ENCODE measurements at regions of chr16 and their contacts with region 1.

Region 1: DNA sequence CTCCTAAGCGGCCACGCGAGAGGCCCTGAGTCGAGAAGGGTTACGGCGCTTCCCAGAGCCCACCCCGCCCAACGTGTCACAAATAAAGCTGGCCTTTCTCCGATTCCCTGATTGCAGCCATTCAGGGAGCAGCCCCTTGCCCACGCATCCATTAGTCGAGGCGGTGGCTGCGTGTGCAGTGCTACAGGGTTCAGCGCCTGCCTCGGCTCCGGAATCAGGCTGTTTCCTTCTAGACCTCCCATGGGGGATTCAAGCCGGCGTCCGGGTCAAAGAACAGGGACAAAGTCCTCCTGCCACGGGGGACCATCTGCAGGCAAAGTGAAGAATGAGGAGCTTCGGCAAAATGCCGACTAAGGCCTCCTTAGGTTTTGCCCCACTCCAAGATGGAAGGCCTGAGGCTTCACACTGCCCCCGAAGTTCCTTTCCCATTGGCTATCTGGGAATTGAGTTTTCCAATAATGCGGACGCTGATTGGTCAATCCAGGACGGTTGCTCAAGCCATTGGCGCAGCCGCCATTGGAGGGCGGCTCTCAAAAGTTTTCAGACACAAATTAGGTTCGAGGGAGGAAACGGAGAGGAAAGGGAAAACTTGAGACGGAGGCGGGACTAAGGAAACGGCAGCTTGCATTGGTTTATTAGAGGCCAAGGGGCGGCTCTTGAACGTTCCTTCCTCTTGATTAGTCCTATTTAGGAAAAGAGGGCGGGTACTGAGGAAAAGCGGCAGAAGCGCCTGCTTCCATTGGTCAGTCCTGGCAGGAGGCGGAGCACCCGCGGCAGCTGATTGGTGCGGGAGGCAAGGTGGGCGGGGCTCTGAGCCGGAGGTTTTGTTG is 430 bp upstream of the KATNB1 start:
- DNase-seq: peak; percentile 95 to 99
- ATAC-seq: peak; percentile 88 to 97 (median 88)
- H3K4me3 ChIP-seq: peak overlapping the region; percentile 70
- H3K4me3 Mint-ChIP-seq: peak overlapping the region; percentile 95
- H3K27ac ChIP-seq: peak overlapping the region; percentile 67
- H3K27ac Mint-ChIP-seq: peak overlapping the region; percentile 96
- H3K4me1 ChIP-seq: peaks cover 24% of the 10 kb centered on the region
- H3K4me1 Mint-ChIP-seq: peaks cover 34 to 37% of the 10 kb centered on the region in 2 donors
- H3K27me3 ChIP-seq: no peaks in the 10 kb centered on the region
- H3K27me3 Mint-ChIP-seq: no peaks in the 10 kb centered on the region
- CTCF ChIP-seq: no peak

Region 2: GRCh38 chr16:57447186-57447962 is 287.8 kb before region 1 on chr16 and contains the starts of genes CIAPIN1 and COQ9:
- intact Hi-C with region 1: loop called (anchors 1 kb)
- DNase-seq: peak; percentile 87 to 97
- ATAC-seq: peak; percentile 98 to 99 (median 99)
- H3K4me3 ChIP-seq: peak within 1 kb of the TSS; percentile 90
- H3K4me3 Mint-ChIP-seq: peak within 1 kb of the TSS; percentile 90
- H3K27ac ChIP-seq: peak within 1 kb of the TSS; percentile 75
- H3K27ac Mint-ChIP-seq: peak within 1 kb of the TSS; percentile 77 to 89
- H3K4me1 ChIP-seq: peaks cover 20% of the 10 kb centered on the region
- H3K4me1 Mint-ChIP-seq: peaks cover 10 to 20% of the 10 kb centered on the region in 2 donors
- H3K27me3 ChIP-seq: no peaks in the 10 kb centered on the region
- H3K27me3 Mint-ChIP-seq: no peaks in the 10 kb centered on the region
- CTCF ChIP-seq: no peak
- total RNA-seq, gene CIAPIN1: 41.1 to 48.8 (median 42.9) TPM
- total RNA-seq, gene COQ9: 16.9 to 30.2 (median 18.3) TPM

Region 3: DNA sequence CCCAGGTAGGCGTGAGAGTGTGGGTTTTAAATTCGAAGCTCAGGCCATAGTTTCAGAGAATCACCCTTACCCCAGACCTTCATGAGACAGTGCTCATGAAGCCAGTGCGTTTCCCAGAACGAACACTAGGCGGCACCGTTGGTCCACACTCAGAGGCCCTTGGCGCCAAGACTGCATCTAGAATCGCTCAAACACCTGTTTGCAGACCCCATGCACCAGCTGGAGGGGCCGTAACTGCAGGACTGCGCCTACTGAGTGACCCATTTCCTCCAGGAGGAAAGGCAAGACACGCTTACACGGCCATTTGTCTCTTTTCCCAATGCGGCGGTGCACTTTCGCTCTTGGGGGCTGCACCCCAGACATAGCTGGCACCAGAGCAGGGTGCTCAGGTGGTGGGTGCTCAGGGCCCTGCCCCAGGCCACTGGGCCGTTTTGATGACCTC is 158.7 kb before region 1 on chr16:
- intact Hi-C with region 1: loop called (anchors 2 kb)
- DNase-seq: peak; percentile 86 to 92
- ATAC-seq: peak; percentile 58 to 70 (median 69)
- H3K4me3 ChIP-seq: no peak overlapping the region
- H3K4me3 Mint-ChIP-seq: peak overlapping the region; percentile 82
- H3K27ac ChIP-seq: peak overlapping the region; percentile 72
- H3K27ac Mint-ChIP-seq: peak overlapping the region; percentile 94 to 97
- H3K4me1 ChIP-seq: peaks cover 58% of the 10 kb centered on the region
- H3K4me1 Mint-ChIP-seq: peaks cover 50 to 61% of the 10 kb centered on the region in 2 donors
- H3K27me3 ChIP-seq: no peaks in the 10 kb centered on the region
- H3K27me3 Mint-ChIP-seq: no peaks in the 10 kb centered on the region
- CTCF ChIP-seq: peak; percentile 87

Region 4: GRCh38 chr16:57648590-57649442 is 86.3 kb before region 1 on chr16:
- intact Hi-C with region 1: loop called (anchors 2 kb)
- DNase-seq: peak; percentile 90 to 93
- ATAC-seq: peak; percentile 60 to 87 (median 66)
- H3K4me3 ChIP-seq: peak overlapping the region; percentile 54
- H3K4me3 Mint-ChIP-seq: peak overlapping the region; percentile 93
- H3K27ac ChIP-seq: peak overlapping the region; percentile 84
- H3K27ac Mint-ChIP-seq: peak overlapping the region; percentile 91 to 96
- H3K4me1 ChIP-seq: peaks cover 98% of the 10 kb centered on the region
- H3K4me1 Mint-ChIP-seq: peaks cover 65 to 66% of the 10 kb centered on the region in 2 donors
- H3K27me3 ChIP-seq: no peaks in the 10 kb centered on the region
- H3K27me3 Mint-ChIP-seq: no peaks in the 10 kb centered on the region
- CTCF ChIP-seq: peak; percentile 100

Region 5: GRCh38 chr16:57757326-57757786 is 22.2 kb after region 1 on chr16:
- intact Hi-C with region 1: loop called (anchors 1 kb)
- DNase-seq: peak; percentile 90 to 96
- ATAC-seq: peak; percentile 93 to 96 (median 94)
- H3K4me3 ChIP-seq: no peak overlapping the region
- H3K4me3 Mint-ChIP-seq: no peak overlapping the region
- H3K27ac ChIP-seq: peak overlapping the region; percentile 48
- H3K27ac Mint-ChIP-seq: peak overlapping the region; percentile 22 to 46
- H3K4me1 ChIP-seq: peaks cover 30% of the 10 kb centered on the region
- H3K4me1 Mint-ChIP-seq: peaks cover 4 to 7% of the 10 kb centered on the region in 2 donors
- H3K27me3 ChIP-seq: no peaks in the 10 kb centered on the region
- H3K27me3 Mint-ChIP-seq: no peaks in the 10 kb centered on the region
- CTCF ChIP-seq: peak; percentile 91

Region 6: DNA sequence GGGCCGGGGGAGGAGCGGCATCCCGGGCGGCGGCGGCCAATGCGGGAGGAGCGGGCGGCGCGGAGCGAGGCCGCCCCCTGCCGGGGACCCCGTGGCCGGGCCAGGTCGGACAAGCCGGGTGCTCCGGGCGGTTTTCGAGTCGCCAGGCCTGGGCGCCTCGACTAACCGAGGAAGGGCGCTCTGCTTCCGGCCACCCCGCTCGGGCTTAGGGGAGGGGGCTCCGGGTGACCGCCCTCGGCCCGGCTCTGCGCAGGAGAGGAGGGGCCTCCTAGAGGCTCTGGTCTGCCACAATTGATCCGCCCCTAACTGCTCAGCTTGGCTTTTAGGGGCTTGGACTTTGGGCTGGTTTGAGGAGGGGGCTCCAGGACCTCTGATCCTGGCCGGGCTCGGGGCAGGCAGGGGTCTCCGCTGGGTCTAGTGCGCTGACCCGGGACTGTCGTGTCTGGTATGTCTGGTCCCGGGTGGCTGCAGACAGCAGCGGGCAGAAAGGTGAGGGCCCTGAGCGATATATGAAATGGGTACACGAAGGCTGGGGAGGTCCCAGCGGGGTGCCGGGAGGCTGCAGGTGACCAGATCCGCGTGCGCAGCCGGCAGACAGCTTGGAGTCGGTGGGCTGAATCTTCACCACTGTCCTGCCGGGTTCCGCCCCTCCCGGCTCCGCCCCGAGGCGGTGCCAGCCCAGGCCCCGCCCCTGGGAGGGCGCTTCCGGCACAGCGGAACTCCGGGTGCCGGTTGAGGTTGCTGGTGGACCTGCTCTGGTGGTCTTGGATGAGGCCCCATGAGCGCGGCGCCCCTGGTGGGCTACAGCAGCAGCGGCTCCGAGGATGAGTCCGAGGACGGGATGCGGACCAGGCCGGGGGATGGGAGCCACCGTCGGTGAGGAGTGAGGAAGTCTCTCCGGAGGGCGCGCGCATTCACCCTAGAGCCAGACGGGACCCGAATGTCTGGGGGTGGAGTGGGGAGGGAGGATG is 265.9 kb after region 1 on chr16 and contains the start of gene USB1:
- intact Hi-C with region 1: loop called (anchors 1 kb)
- DNase-seq: peak; percentile 91 to 92
- ATAC-seq: peak; percentile 78 to 92 (median 80)
- H3K4me3 ChIP-seq: peak within 1 kb of the TSS; percentile 84
- H3K4me3 Mint-ChIP-seq: peak within 1 kb of the TSS; percentile 92
- H3K27ac ChIP-seq: peak within 1 kb of the TSS; percentile 86
- H3K27ac Mint-ChIP-seq: peak within 1 kb of the TSS; percentile 86 to 90
- H3K4me1 ChIP-seq: peaks cover 56% of the 10 kb centered on the region
- H3K4me1 Mint-ChIP-seq: peaks cover 55 to 64% of the 10 kb centered on the region in 2 donors
- H3K27me3 ChIP-seq: no peaks in the 10 kb centered on the region
- H3K27me3 Mint-ChIP-seq: no peaks in the 10 kb centered on the region
- CTCF ChIP-seq: peak; percentile 81
- total RNA-seq, gene USB1: 64.7 to 86.0 (median 84.8) TPM

Measured in natural killer cell (primary cell).